Head of caudate nucleus (tissue), 42 donors: ENCODE measurements at regions of chr10 and their contacts with region 1.

Region 1: DNA sequence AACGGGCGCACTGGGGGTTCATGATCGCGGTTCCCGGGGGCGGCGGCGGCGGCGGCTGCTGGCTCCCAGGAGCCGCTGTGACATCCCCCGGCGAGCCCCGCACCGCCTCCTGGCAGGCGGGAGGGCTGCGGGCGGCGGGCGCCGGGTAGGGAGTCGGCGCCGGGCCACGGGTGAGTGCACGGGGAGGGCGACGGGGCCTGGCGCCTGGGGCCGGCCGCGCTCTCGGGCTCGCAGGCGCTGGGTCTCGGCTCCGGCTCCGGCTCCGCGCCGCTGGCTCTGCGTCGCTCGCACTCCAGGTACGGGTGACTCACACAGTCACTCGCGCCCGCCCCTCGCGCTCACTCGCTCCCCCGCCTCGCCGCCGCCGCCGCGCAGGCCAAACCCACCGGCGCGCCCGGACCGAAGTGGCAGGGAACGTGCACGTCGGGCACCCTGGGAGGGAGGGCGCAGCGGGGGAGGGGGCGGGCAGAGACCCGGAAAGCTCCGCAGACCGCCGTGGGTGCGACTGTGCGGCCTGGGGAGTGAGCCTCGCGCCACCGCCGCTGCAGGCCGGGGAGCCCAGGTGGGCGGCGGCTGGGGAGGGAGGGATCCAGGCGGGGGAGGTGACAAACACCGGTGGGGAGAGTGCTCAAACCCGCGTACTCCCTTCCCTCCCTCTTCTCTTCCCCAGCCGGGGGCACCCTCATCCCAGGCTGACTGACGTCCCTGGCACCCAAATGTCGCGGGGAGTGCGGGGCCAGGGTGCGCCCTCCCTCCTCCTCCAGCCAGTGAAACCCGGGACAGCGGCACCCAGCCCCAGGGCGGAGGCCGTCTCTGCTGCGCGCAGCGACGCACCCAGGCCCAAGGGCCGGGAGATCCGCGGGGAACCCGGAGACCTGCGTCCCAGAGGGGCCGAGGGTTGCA is 277.0 kb upstream of the NEBL start:
- DNase-seq: peak; percentile 44 to 93 (median 78)

Region 2: DNA sequence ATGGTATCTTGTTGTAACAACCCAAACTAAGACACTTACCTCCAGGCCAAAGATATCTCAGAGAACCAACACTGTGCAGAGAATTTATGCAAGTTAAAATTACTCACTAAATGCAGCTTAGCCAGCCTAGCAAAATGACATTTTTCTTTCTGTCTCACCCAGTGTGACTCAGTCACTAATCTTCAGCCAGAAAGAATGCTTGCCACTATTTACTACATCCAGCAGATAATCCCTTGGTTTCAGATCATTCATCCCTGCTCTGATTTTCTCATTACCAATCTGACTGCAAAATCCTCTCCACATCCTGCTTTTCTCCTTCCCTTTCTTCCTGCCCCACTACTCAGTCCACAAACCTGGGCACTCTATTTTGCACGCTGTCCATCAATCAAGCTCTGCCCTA is 183.5 kb before region 1 on chr10:
- intact Hi-C with region 1: no loop called
- DNase-seq: no peak

Region 3: DNA sequence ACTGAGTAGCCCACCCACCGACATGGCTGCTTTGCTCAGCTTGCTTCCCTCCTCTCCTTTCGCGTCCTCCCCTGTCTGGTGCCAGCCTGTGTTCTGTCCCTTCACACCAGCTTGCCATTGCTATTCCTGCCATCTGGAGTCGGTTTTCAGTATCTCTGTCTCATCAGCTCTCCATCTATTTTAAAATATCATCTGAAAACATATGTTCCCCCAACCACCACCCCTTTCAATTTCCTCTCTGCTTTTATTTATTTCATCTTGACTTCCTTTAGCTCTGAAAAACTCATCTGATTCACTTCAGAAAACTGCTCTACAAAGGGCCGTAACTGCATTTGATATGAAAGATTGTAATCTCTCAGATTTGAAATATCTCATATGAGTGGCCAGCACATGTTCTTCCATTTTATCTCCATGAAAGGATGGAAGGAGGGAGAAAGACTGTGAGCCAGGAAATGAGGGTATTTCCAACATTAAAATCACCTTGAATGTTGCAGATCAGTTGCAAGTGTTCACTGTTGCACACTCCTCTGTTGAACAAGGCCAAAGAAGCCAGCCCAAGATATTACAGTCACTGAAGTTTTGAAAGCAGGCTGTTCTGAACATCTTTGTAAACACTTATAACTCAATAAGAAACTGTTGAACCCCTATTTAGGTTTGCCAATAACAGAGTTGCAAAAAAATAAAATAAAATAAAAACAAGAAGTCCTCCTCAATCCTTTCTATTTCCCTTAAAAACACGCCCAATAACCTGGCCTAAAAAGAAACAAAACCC is 74.6 kb before region 1 on chr10:
- intact Hi-C with region 1: loop called (anchors 10 kb)
- DNase-seq: no peak